K562 (cell line): ENCODE measurements at regions of chr12 and their contacts with region 1.

Region 1: DNA sequence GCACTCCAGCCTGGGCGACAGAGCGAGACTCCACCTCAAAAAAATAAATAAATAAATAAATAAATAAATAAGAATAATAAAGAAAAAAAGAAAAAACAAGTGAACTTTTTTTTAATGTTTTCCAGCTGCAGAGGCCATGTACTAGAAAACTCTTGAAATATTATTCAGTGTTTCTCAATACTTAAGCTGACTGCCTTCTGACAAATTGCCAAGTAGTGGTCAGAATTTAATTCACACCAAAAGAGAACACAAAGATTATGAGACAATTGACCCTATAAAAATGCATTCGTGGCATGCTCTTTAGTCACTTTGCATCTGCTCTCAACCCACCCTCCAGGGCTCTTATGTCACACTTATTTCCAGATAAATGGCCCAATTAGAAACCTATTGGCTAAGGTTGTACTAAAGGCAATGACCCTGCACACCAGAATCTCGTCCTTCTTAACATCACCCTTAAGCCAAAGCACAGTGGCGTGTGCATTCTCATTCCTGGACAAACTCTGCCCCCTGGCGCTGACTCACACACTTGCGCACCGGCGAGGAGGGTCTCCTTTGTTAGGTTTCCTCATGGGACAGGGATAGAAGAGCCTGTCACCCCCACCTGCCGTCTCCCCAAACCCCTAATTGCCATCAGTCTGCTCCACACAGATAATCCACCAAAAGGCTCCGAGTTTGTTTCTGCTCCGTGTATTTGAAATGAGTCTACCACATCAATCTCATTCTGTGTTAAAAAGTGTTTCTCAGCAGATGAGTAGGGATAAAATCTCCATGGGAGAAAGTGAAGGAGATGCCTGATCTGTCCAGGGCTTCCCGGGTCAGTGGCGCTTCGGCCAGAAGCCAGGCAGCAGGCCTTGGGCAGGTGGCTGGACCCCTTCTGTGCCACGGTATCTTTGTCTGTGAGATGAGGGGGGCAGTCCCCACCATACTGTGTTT is 73.1 kb upstream of the CEP83 start:
- DNase-seq: peak; percentile 70 to 76 (median 70)
- ATAC-seq: peak; percentile 98
- H3K4me3 ChIP-seq: no peak overlapping the region
- H3K27ac ChIP-seq: no peak overlapping the region
- H3K4me1 ChIP-seq: no peaks in the 10 kb centered on the region
- H3K27me3 ChIP-seq: peaks cover 5 to 32% of the 10 kb centered on the region in 2 experiments; a peak in 4 of 5 replicates
- CTCF ChIP-seq: peak; percentile 81 to 85 (median 85)
- EP300 ChIP-seq: no peak
- POLR2A ChIP-seq: no peak
- RAD21 ChIP-seq: peak; percentile 96 to 97

Region 2: DNA sequence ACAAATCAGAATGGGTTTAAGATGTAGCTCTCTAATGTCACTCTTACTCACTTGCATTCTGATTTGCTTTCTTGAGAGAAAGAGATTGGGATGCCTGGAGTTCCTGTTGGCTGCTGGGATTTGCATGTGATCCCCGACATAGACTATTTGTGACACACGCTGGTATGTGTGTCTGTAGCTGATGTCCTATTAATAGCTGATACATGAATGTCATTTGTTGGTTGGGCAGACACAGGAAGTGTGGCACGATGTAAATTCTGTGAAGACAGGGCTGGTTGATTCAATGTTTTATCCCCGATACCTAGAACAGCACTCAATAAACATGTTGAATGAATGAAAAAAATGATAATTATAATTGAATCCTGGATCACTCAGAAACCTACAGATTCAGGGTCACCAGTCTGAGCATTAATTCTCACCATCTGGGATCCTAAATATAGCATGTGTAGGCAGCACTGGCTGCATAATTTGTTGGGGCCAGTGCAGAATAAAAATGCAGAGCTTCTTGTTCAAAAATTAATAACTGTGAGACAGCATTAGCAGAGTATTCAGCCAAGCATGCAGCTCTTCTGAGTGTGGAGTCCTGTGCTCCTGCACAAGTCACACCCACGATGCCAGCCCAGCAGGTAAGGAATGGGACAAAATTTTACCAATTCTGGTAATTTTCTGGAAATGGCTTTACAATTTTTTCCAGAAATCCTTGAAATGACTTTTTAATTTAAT is 995.8 kb before region 1 on chr12:
- CTCF ChIA-PET with region 1: no interaction called
- POLR2A ChIA-PET with region 1: no interaction called
- in situ Hi-C with region 1: loop called (anchors 25 kb)
- intact Hi-C with region 1: no loop called
- DNase-seq: no peak
- ATAC-seq: no peak
- H3K4me3 ChIP-seq: no peak overlapping the region
- H3K27ac ChIP-seq: no peak overlapping the region
- H3K4me1 ChIP-seq: no peaks in the 10 kb centered on the region; a peak in 2 of 5 replicates
- H3K27me3 ChIP-seq: no peaks in the 10 kb centered on the region
- CTCF ChIP-seq: no peak
- EP300 ChIP-seq: no peak
- POLR2A ChIP-seq: no peak
- RAD21 ChIP-seq: no peak

Region 3: GRCh38 chr12:94133964-94134795 is 398.6 kb before region 1 on chr12:
- CTCF ChIA-PET with region 1: interaction called, 15 read pairs
- POLR2A ChIA-PET with region 1: no interaction called
- in situ Hi-C with region 1: loop called (anchors 5 kb)
- intact Hi-C with region 1: no loop called
- DNase-seq: peak; percentile 56 to 73 (median 67)
- ATAC-seq: peak; percentile 86
- H3K4me3 ChIP-seq: no peak overlapping the region
- H3K27ac ChIP-seq: no peak overlapping the region
- H3K4me1 ChIP-seq: no peaks in the 10 kb centered on the region
- H3K27me3 ChIP-seq: peaks cover 4 to 10% of the 10 kb centered on the region in 2 experiments; a peak in 3 of 5 replicates
- CTCF ChIP-seq: peak; percentile 59 to 76 (median 64); a peak in 4 of 6 replicates
- EP300 ChIP-seq: no peak
- POLR2A ChIP-seq: no peak
- RAD21 ChIP-seq: peak; percentile 60 to 78

Region 4: GRCh38 chr12:94139816-94140215 is 392.9 kb before region 1 on chr12:
- CTCF ChIA-PET with region 1: interaction called, 15 read pairs
- POLR2A ChIA-PET with region 1: no interaction called
- in situ Hi-C with region 1: loop called (anchors 5 kb)
- intact Hi-C with region 1: loop called (anchors 1 kb)
- DNase-seq: no peak
- ATAC-seq: peak; percentile 29; the same call in 1 of the 3 replicates
- H3K4me3 ChIP-seq: no peak overlapping the region
- H3K27ac ChIP-seq: no peak overlapping the region
- H3K4me1 ChIP-seq: peaks cover 3 to 10% of the 10 kb centered on the region in 2 experiments; a peak in 3 of 5 replicates
- H3K27me3 ChIP-seq: peaks cover 16 to 49% of the 10 kb centered on the region in 2 experiments; a peak in 4 of 5 replicates
- CTCF ChIP-seq: 0 out of 6 replicates have a peak, but pooled peaks of 1 of the 3 experiments have one; percentile 9
- EP300 ChIP-seq: no peak
- POLR2A ChIP-seq: no peak
- RAD21 ChIP-seq: no peak

Region 5: GRCh38 chr12:94145191-94145983 is 387.4 kb before region 1 on chr12:
- CTCF ChIA-PET with region 1: interaction called, 15 read pairs
- POLR2A ChIA-PET with region 1: no interaction called
- in situ Hi-C with region 1: no loop called
- intact Hi-C with region 1: loop called (anchors 1 kb)
- DNase-seq: peak; percentile 23 to 47 (median 32)
- ATAC-seq: peak; percentile 58
- H3K4me3 ChIP-seq: no peak overlapping the region
- H3K27ac ChIP-seq: no peak overlapping the region
- H3K4me1 ChIP-seq: peaks cover 9 to 21% of the 10 kb centered on the region in 2 experiments; a peak in 4 of 5 replicates
- H3K27me3 ChIP-seq: peaks cover 7 to 61% of the 10 kb centered on the region in 2 experiments; a peak in 3 of 5 replicates
- CTCF ChIP-seq: peak; percentile 41 to 63 (median 45); a peak in 5 of 6 replicates
- EP300 ChIP-seq: no peak
- POLR2A ChIP-seq: no peak
- RAD21 ChIP-seq: peak; percentile 60 to 83

Region 6: GRCh38 chr12:94305130-94305957 is 227.4 kb before region 1 on chr12:
- CTCF ChIA-PET with region 1: no interaction called
- POLR2A ChIA-PET with region 1: no interaction called
- in situ Hi-C with region 1: no loop called
- intact Hi-C with region 1: loop called (anchors 10 kb)
- DNase-seq: peak in 1 of 4 experiments; percentile 7
- ATAC-seq: no peak
- H3K4me3 ChIP-seq: no peak overlapping the region
- H3K27ac ChIP-seq: no peak overlapping the region
- H3K4me1 ChIP-seq: no peaks in the 10 kb centered on the region
- H3K27me3 ChIP-seq: no peaks in the 10 kb centered on the region
- CTCF ChIP-seq: no peak
- EP300 ChIP-seq: no peak
- POLR2A ChIP-seq: no peak
- RAD21 ChIP-seq: no peak